ENCODE measurements at regions of chr12 and their contacts with region 1.

Region 1: GRCh38 chr12:22687361-22688076 is 62.5 kb downstream of the ETNK1 start:
- DNase-seq: peak; percentile 28
- H3K4me3 Mint-ChIP-seq: no peak overlapping the region
- H3K27ac Mint-ChIP-seq: peak overlapping the region; percentile 69
- H3K4me1 Mint-ChIP-seq: peaks cover 28% of the 10 kb centered on the region
- H3K27me3 Mint-ChIP-seq: no peaks in the 10 kb centered on the region

Region 2: GRCh38 chr12:22624870-22625761 is 62.4 kb before region 1 on chr12 and contains the start of gene ETNK1:
- CTCF ChIA-PET with region 1: interaction called, 4 read pairs
- POLR2A ChIA-PET with region 1: interaction called, 10 read pairs
- DNase-seq: peak; percentile 89
- H3K4me3 Mint-ChIP-seq: peak within 1 kb of the TSS; percentile 100
- H3K27ac Mint-ChIP-seq: peak within 1 kb of the TSS; percentile 92
- H3K4me1 Mint-ChIP-seq: peaks cover 31% of the 10 kb centered on the region
- H3K27me3 Mint-ChIP-seq: peaks cover 9% of the 10 kb centered on the region
- total RNA-seq, gene ETNK1: 72.0 to 84.9 TPM